ENCODE measurements at regions of chr10 and their contacts with region 1.

Region 1: DNA sequence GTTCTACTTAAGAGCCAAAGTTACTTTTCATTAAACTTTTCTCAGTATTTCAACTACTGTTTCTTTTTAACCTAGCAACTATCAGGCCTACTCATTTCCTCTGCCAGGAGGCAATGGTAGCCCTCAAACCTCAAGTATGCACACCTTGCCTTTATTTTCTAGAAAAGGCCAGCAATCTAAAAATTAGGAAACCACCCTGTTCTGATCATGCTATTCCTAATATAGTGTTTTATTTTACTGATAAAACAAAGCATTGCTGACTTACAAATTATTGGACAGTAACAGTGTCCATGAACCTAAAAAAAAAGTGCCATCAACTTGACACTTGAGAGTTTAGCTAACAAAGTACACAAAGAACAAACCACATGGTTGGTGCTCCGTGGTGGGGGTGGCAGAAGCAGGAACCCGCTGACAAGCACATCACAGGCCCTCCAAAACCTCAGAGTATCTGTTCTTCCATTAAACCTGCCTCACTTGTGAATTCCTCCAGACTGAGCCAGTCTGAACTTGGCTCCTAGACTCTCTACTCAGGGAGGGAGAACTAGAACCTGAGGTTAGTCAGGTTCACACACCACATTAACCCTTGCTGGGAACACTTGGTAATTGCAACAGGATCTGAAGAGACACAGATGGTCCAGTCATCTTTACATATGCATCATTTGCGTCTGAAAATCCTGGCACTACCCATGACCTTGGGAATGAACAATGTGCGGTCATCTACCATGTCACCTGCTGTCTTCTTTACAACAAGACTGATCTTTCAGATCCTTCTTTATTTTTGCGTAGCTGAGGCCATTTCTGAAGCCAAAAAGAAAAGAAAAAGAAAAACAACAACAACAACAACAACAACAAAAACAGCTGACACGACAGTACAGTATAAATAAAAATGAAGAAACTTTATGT is 31.9 kb downstream of the PIP4K2A start:
- DNase-seq: peak; percentile 62 to 84
- ATAC-seq: peak; percentile 46 to 76 (median 71)
- H3K4me3 ChIP-seq: no peak overlapping the region
- H3K4me3 Mint-ChIP-seq: peak overlapping the region; percentile 85
- H3K27ac ChIP-seq: peak overlapping the region; percentile 94
- H3K27ac Mint-ChIP-seq: peak overlapping the region; percentile 92 to 99
- H3K4me1 ChIP-seq: peaks cover 63% of the 10 kb centered on the region
- H3K4me1 Mint-ChIP-seq: peaks cover 86 to 90% of the 10 kb centered on the region in 2 donors
- H3K27me3 ChIP-seq: no peaks in the 10 kb centered on the region
- H3K27me3 Mint-ChIP-seq: no peaks in the 10 kb centered on the region
- CTCF ChIP-seq: no peak

Region 2: GRCh38 chr10:22597138-22597537 is 85.3 kb before region 1 on chr10:
- intact Hi-C with region 1: loop called (anchors 2 kb)
- DNase-seq: peak; percentile 61 to 79
- ATAC-seq: peak; percentile 89 to 98 (median 97)
- H3K4me3 ChIP-seq: no peak overlapping the region
- H3K4me3 Mint-ChIP-seq: peak overlapping the region; percentile 85
- H3K27ac ChIP-seq: peak overlapping the region; percentile 79
- H3K27ac Mint-ChIP-seq: peak overlapping the region; percentile 99
- H3K4me1 ChIP-seq: peaks cover 76% of the 10 kb centered on the region
- H3K4me1 Mint-ChIP-seq: peaks cover 82 to 84% of the 10 kb centered on the region in 2 donors
- H3K27me3 ChIP-seq: no peaks in the 10 kb centered on the region
- H3K27me3 Mint-ChIP-seq: no peaks in the 10 kb centered on the region
- CTCF ChIP-seq: no peak

Region 3: GRCh38 chr10:22635650-22636049 is 46.8 kb before region 1 on chr10:
- intact Hi-C with region 1: loop called (anchors 2 kb)
- DNase-seq: no peak
- ATAC-seq: no peak
- H3K4me3 ChIP-seq: no peak overlapping the region
- H3K4me3 Mint-ChIP-seq: peak overlapping the region; percentile 90
- H3K27ac ChIP-seq: peak overlapping the region; percentile 97
- H3K27ac Mint-ChIP-seq: peak overlapping the region; percentile 99
- H3K4me1 ChIP-seq: peaks cover 72% of the 10 kb centered on the region
- H3K4me1 Mint-ChIP-seq: peaks cover 90 to 93% of the 10 kb centered on the region in 2 donors
- H3K27me3 ChIP-seq: no peaks in the 10 kb centered on the region
- H3K27me3 Mint-ChIP-seq: no peaks in the 10 kb centered on the region
- CTCF ChIP-seq: no peak

Region 4: DNA sequence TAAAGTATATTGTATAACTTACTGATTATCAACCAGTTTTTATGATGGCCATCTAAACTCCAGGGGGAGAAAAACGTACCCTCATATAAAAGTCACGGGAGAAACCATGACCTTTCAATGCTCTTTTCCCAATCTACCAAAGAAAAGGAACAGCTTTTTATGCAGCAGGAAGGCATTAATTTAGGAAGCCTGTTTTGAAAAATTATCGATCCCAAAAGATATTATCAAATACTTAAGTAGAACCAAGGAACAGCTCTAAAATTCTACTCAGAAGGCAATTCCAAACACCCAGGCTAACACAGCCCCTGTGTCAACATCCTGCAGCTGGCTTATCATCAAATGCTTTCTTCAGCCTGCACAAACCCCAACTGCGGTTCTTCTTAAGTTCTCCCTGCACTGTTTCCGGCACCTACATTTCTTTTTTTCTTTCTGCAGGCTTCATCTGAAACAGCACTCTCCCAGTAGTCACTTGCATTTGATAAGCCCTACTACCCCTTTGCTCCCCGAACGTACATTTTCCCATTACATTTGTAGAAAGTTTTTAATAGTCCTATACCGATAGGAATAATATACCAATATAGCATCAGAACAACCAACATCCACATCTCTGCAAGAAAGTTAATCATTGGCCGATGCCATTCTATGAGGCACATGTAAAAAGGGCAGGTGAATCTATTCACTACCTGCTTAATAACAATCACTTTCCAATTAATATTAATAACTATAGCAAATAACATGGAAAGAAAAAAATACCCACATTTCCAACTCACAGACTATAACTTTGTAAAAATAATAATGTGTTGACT is 16.0 kb before region 1 on chr10:
- intact Hi-C with region 1: loop called (anchors 1 kb)
- DNase-seq: peak in 1 of 2 donors; percentile 91
- ATAC-seq: peak; percentile 78 to 89 (median 89)
- H3K4me3 ChIP-seq: peak overlapping the region; percentile 2
- H3K4me3 Mint-ChIP-seq: peak overlapping the region; percentile 87
- H3K27ac ChIP-seq: peak overlapping the region; percentile 38
- H3K27ac Mint-ChIP-seq: peak overlapping the region; percentile 81 to 99
- H3K4me1 ChIP-seq: peaks cover 35% of the 10 kb centered on the region
- H3K4me1 Mint-ChIP-seq: peaks cover 69 to 83% of the 10 kb centered on the region in 2 donors
- H3K27me3 ChIP-seq: no peaks in the 10 kb centered on the region
- H3K27me3 Mint-ChIP-seq: no peaks in the 10 kb centered on the region
- CTCF ChIP-seq: no peak

Region 5: DNA sequence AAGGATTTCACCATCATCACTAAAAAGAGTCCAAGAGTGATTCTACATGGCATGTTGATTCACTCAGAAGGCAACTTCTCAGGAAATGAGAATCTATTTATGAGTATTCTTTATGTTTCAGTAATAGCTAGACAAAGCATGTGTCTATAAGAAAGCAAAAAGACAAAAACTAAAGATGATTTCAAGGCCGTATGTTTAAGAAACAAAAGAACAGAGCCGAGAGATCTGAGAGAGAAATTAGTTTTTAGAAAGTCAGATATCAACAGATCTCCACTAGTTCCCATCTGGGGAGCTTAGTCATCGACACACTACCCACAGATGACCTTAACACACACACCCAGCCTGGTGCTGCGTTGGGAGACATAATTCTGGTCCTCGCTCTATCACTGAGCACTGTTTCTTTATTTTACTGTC is 10.9 kb after region 1 on chr10:
- intact Hi-C with region 1: loop called (anchors 1 kb)
- DNase-seq: peak in 1 of 2 donors; percentile 48
- ATAC-seq: peak; percentile 89 to 93 (median 90)
- H3K4me3 ChIP-seq: no peak overlapping the region
- H3K4me3 Mint-ChIP-seq: peak overlapping the region; percentile 84
- H3K27ac ChIP-seq: peak overlapping the region; percentile 62
- H3K27ac Mint-ChIP-seq: peak overlapping the region; percentile 79 to 99
- H3K4me1 ChIP-seq: peaks cover 48% of the 10 kb centered on the region
- H3K4me1 Mint-ChIP-seq: peaks cover 76 to 84% of the 10 kb centered on the region in 2 donors
- H3K27me3 ChIP-seq: no peaks in the 10 kb centered on the region
- H3K27me3 Mint-ChIP-seq: no peaks in the 10 kb centered on the region
- CTCF ChIP-seq: no peak

Measured in natural killer cell (primary cell).